Endothelial cell of umbilical vein (primary cell): ENCODE measurements at regions of chr5 and their contacts with region 1.

Region 1: GRCh38 chr5:77292026-77292757 is 81.7 kb downstream of the PDE8B start:
- DNase-seq: no peak
- H3K4me3 ChIP-seq: no peak overlapping the region
- H3K27ac ChIP-seq: no peak overlapping the region
- H3K4me1 ChIP-seq: no peaks in the 10 kb centered on the region
- H3K27me3 ChIP-seq: peaks cover 0 to 6% of the 10 kb centered on the region in 2 experiments
- CTCF ChIP-seq: no peak
- POLR2A ChIP-seq: no peak

Region 2: GRCh38 chr5:77431286-77431685 is 139.1 kb after region 1 on chr5:
- CTCF ChIA-PET with region 1: no interaction called
- POLR2A ChIA-PET with region 1: no interaction called
- dilution Hi-C with region 1: no loop called
- intact Hi-C with region 1: no loop called
- DNase-seq: no peak
- H3K4me3 ChIP-seq: no peak overlapping the region
- H3K27ac ChIP-seq: no peak overlapping the region
- H3K4me1 ChIP-seq: no peaks in the 10 kb centered on the region
- H3K27me3 ChIP-seq: no peaks in the 10 kb centered on the region
- CTCF ChIP-seq: no peak
- POLR2A ChIP-seq: no peak

Region 3: GRCh38 chr5:79050498-79050897 is 1758.3 kb after region 1 on chr5:
- CTCF ChIA-PET with region 1: no interaction called
- POLR2A ChIA-PET with region 1: no interaction called
- dilution Hi-C with region 1: no loop called
- intact Hi-C with region 1: loop called (anchors 10 kb)
- DNase-seq: no peak
- H3K4me3 ChIP-seq: no peak overlapping the region
- H3K27ac ChIP-seq: no peak overlapping the region
- H3K4me1 ChIP-seq: no peaks in the 10 kb centered on the region
- H3K27me3 ChIP-seq: peaks cover 0 to 3% of the 10 kb centered on the region in 2 experiments
- CTCF ChIP-seq: no peak
- POLR2A ChIP-seq: no peak